ENCODE measurements at regions of chr10 and their contacts with region 1.

Region 1: GRCh38 chr10:119207367-119207668 is at the start of gene GRK5:
- DNase-seq: peak; percentile 93
- ATAC-seq: peak; percentile 77
- H3K4me3 ChIP-seq: peak within 1 kb of the TSS; percentile 78
- H3K27ac ChIP-seq: peak within 1 kb of the TSS; percentile 56
- H3K4me1 ChIP-seq: peaks cover 43% of the 10 kb centered on the region
- H3K27me3 ChIP-seq: no peaks in the 10 kb centered on the region
- CTCF ChIP-seq: no peak
- total RNA-seq, gene GRK5: 4.5 and 5.0 TPM in 2 replicates

Region 2: GRCh38 chr10:119270762-119271366 is 63.5 kb after region 1 on chr10:
- CTCF ChIA-PET with region 1: interaction called, 8 read pairs
- POLR2A ChIA-PET with region 1: no interaction called
- intact Hi-C with region 1: loop called (anchors 1 kb)
- DNase-seq: peak; percentile 50
- ATAC-seq: peak; percentile 85
- H3K4me3 ChIP-seq: peak overlapping the region; percentile 45; the same call in 1 of the 2 replicates
- H3K27ac ChIP-seq: peak overlapping the region; percentile 84
- H3K4me1 ChIP-seq: peaks cover 22% of the 10 kb centered on the region
- H3K27me3 ChIP-seq: no peaks in the 10 kb centered on the region
- CTCF ChIP-seq: no peak

Region 3: DNA sequence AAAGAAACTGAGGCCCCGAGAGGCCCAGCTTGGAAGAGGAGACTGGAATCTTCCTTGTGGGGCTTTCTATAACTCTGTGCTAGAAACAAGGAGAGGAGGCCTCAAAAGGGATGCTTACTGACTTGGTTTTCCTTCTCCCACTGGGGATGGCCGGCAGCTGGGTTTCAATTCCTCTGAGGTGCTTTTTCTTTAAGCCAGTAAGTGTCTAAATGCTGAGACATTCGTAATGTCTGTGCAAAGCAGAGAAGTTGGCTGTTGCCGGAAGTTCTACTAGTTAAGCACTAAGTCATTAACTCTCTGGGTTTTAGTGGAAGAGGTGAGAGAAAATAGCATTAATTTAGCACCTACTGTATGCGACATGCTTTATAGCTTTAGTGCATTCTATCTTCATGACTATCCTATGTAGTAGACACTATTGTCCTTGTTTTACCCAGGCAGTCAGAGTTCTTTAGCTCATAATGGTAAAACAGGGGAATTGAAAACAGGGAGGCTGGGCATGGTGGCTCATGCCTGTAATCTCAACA is 200.0 kb after region 1 on chr10:
- CTCF ChIA-PET with region 1: no interaction called
- POLR2A ChIA-PET with region 1: interaction called, 18 read pairs
- intact Hi-C with region 1: no loop called
- DNase-seq: no peak
- ATAC-seq: no peak
- H3K4me3 ChIP-seq: no peak overlapping the region
- H3K27ac ChIP-seq: no peak overlapping the region
- H3K4me1 ChIP-seq: no peaks in the 10 kb centered on the region
- H3K27me3 ChIP-seq: no peaks in the 10 kb centered on the region
- CTCF ChIP-seq: no peak

Region 4: GRCh38 chr10:119445311-119445934 is 238.1 kb after region 1 on chr10:
- CTCF ChIA-PET with region 1: no interaction called
- POLR2A ChIA-PET with region 1: no interaction called
- intact Hi-C with region 1: loop called (anchors 1 kb)
- DNase-seq: peak; percentile 73
- ATAC-seq: peak; percentile 49
- H3K4me3 ChIP-seq: no peak overlapping the region
- H3K27ac ChIP-seq: no peak overlapping the region
- H3K4me1 ChIP-seq: peaks cover 14% of the 10 kb centered on the region
- H3K27me3 ChIP-seq: no peaks in the 10 kb centered on the region
- CTCF ChIP-seq: peak; percentile 84

Region 5: DNA sequence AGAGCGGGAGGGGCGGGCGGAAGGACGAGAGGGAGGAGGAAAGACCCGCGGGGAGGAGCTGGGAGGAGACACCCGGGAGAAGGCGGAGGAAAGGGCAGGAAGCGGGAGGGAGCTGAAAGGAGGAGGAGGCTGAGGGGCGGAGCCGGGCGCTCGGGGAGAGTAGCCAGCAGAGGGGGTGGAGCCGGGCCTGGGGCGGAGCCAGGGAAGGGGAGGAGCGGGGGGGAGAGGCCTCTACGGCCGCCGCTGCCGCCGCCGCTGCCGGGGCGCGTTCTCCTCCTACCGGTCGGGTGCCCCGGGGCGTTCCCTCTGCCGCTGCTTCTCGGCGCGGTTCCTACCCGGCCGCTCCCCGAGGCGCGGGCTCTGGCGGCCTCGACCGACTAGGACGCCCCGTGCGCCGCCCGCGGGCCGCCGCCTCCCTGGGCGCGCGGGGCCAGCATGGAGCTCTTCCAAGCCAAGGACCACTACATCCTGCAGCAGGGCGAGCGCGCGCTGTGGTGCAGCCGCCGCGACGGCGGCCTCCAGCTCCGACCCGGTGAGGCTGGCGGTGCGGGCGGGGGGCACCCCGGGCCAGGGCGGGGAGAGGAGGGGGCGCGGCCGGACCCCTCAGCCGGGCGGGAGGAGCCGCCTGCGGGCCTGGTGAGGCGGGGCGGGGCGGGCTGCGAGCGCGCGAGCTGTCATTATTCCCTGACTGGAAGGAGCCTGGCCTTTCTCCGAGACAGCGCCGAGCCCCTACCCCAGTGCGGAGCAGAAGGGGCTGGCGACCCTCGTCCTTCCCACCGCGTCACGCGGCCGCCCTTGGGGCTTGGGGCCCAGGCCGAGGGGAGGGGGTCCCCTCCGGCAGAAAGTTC is 518.7 kb after region 1 on chr10 and contains the start of gene INPP5F:
- CTCF ChIA-PET with region 1: no interaction called
- POLR2A ChIA-PET with region 1: interaction called, 13 read pairs
- intact Hi-C with region 1: no loop called
- DNase-seq: peak; percentile 93
- ATAC-seq: peak; percentile 89
- H3K4me3 ChIP-seq: peak within 1 kb of the TSS; percentile 82
- H3K27ac ChIP-seq: peak within 1 kb of the TSS; percentile 68
- H3K4me1 ChIP-seq: peaks cover 24% of the 10 kb centered on the region
- H3K27me3 ChIP-seq: no peaks in the 10 kb centered on the region
- CTCF ChIP-seq: no peak
- total RNA-seq, gene INPP5F: 8.1 and 8.2 TPM in 2 replicates